ENCODE measurements at regions of chr7 and their contacts with region 1.

Region 1: DNA sequence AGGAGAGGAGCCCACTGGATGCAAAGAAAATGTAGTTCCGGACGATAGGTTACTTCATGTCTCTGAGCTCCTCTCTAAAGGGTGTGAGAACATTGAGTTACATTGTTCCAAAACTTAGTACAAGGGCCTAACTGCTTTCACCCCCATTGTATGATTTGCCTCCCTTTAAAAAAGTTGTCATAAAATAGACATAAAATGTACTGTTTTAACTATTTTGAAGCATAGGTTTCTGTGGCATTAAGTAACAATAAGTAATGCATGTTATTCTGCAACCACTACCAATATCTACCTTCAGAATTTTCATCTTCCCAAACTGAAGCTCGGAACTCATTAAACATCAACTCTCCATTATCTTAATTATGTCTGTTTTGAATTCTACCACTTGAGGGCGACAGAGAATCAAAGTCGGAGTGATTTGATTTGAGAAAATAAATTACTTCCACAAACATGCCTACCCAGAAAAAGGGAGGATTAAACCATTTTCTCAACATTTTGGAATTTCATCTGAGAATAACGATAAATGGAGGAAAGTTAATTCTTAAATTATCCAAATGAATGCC is 2.7 kb downstream of the IGFBP1 start:
- DNase-seq: peak; percentile 62
- H3K4me3 ChIP-seq: no peak overlapping the region
- H3K27ac ChIP-seq: peak overlapping the region; percentile 30
- H3K4me1 ChIP-seq: peaks cover 46% of the 10 kb centered on the region
- H3K27me3 ChIP-seq: peaks cover 0 to 1% of the 10 kb centered on the region in 2 experiments
- CTCF ChIP-seq: peak; percentile 20 to 40
- POLR2A ChIP-seq: no peak

Region 2: DNA sequence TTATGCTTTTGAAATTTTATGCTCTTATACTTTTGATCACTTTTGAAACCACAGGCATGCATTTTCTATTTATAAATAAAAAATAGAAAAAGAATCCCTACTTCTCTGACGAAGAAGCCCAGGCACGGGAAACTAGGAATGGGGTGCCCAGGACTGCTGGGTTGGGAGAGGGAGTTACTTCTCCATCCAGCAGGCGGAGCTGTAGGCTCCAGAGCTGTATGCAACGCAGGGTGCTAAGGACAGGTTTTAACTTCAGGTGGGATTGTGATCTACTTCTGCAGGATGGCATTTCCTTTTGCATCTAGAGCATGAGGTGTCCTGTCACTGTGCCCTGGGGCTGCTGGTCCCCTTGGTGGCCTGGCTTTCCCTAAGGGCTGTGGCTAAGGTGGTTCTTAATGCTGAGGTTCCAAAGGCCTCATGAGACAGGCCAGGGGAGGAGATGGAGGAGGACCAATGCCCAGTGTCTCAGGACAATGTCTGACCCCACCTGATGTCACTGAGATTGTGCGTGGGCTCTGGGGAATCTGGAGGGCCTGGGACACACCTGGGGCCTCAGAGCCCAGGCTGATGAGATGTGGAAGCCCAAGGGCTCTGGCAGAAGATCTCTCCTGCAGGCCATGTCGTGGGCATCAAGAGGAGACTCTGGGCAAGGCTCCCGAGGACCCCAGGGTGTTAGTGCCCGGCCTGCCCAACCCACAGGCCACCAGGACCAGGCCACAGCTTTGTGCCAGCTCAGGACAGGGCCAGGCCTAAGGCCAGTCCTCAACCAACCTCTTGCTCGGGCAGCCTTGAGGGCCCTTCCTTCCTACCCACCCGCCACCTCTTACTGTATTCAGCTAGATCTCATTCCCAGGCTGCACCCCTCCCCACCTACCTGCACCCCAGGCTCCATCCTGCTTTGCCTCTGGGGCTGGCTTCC is 18.6 kb before region 1 on chr7:
- CTCF ChIA-PET with region 1: interaction called, 9 read pairs
- POLR2A ChIA-PET with region 1: no interaction called
- dilution Hi-C with region 1: no loop called
- intact Hi-C with region 1: loop called (anchors 1 kb)
- DNase-seq: no peak
- H3K4me3 ChIP-seq: no peak overlapping the region
- H3K27ac ChIP-seq: no peak overlapping the region
- H3K4me1 ChIP-seq: peaks cover 15% of the 10 kb centered on the region
- H3K27me3 ChIP-seq: no peaks in the 10 kb centered on the region
- CTCF ChIP-seq: peak; percentile 67 to 71
- POLR2A ChIP-seq: no peak

Region 3: DNA sequence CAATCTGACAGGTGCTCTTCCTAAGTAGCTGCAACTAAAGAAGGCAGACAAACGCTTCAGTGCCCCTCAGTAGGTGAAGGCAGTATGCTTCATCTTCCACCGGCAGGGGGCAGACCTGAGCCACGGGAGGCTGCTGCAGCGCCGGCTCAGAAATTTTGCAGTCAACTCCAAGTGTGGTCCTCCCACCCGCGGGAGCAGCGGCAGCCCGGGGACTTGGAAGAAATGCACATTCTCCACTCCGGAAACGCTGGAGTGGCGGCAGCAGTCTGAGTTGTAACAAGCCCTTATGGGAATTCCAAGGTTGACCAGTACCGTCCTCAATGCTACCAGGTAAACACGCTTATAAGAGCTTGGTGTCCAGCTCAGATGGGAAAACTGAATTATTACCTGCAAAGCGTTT is 26.7 kb after region 1 on chr7:
- CTCF ChIA-PET with region 1: interaction called, 100 read pairs
- POLR2A ChIA-PET with region 1: no interaction called
- dilution Hi-C with region 1: no loop called
- intact Hi-C with region 1: loop called (anchors 1 kb)
- DNase-seq: peak; percentile 69
- H3K4me3 ChIP-seq: no peak overlapping the region
- H3K27ac ChIP-seq: no peak overlapping the region
- H3K4me1 ChIP-seq: peaks cover 24% of the 10 kb centered on the region
- H3K27me3 ChIP-seq: peaks cover 22 to 37% of the 10 kb centered on the region in 2 experiments
- CTCF ChIP-seq: peak; percentile 87 to 93
- POLR2A ChIP-seq: no peak

Region 4: GRCh38 chr7:46321556-46322205 is 430.7 kb after region 1 on chr7:
- CTCF ChIA-PET with region 1: interaction called, 3 read pairs
- POLR2A ChIA-PET with region 1: no interaction called
- dilution Hi-C with region 1: no loop called
- intact Hi-C with region 1: loop called (anchors 1 kb)
- DNase-seq: peak; percentile 94
- H3K4me3 ChIP-seq: no peak overlapping the region
- H3K27ac ChIP-seq: peak overlapping the region; percentile 58
- H3K4me1 ChIP-seq: no peaks in the 10 kb centered on the region
- H3K27me3 ChIP-seq: no peaks in the 10 kb centered on the region
- CTCF ChIP-seq: no peak
- POLR2A ChIP-seq: no peak

Region 5: DNA sequence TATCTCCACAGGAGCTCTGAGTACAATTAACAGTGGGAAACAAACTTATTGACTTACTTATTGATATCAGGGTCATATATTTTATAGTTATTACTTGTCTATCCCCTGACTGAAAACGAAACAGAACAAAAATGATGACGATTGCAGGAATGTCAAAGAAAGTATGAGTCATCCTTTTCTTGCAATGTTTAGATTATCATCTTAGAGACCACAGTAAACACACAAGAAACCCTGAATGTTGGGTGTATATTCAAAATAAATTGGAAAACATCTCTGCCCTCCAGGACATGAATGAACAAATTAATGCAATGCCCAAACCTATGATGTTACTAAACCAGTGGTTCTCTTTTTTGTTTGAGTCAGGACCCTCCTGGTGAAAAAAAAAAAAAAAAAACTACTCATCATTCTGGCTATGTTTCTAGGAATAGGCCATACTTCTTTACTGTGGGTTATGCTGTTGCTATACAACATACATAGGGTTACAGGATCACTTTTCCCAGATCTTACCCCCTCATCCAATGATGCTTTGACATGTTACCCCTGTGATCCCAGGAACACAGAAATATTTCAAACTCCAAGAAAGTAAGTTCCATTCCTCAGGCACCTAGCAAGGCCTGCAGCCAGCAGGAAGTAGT is 653.5 kb after region 1 on chr7:
- CTCF ChIA-PET with region 1: no interaction called
- POLR2A ChIA-PET with region 1: no interaction called
- dilution Hi-C with region 1: no loop called
- intact Hi-C with region 1: loop called (anchors 1 kb)
- DNase-seq: peak; percentile 72
- H3K4me3 ChIP-seq: no peak overlapping the region
- H3K27ac ChIP-seq: peak overlapping the region; percentile 96
- H3K4me1 ChIP-seq: peaks cover 26% of the 10 kb centered on the region
- H3K27me3 ChIP-seq: no peaks in the 10 kb centered on the region
- CTCF ChIP-seq: no peak
- POLR2A ChIP-seq: no peak

Region 6: GRCh38 chr7:47179812-47180515 is 1289.0 kb after region 1 on chr7:
- CTCF ChIA-PET with region 1: interaction called, 7 read pairs
- POLR2A ChIA-PET with region 1: no interaction called
- dilution Hi-C with region 1: no loop called
- intact Hi-C with region 1: loop called (anchors 1 kb)
- DNase-seq: peak; percentile 51
- H3K4me3 ChIP-seq: no peak overlapping the region
- H3K27ac ChIP-seq: no peak overlapping the region
- H3K4me1 ChIP-seq: no peaks in the 10 kb centered on the region
- H3K27me3 ChIP-seq: peaks cover 0 to 2% of the 10 kb centered on the region in 2 experiments
- CTCF ChIP-seq: peak; percentile 69 to 74
- POLR2A ChIP-seq: no peak

Region 7: DNA sequence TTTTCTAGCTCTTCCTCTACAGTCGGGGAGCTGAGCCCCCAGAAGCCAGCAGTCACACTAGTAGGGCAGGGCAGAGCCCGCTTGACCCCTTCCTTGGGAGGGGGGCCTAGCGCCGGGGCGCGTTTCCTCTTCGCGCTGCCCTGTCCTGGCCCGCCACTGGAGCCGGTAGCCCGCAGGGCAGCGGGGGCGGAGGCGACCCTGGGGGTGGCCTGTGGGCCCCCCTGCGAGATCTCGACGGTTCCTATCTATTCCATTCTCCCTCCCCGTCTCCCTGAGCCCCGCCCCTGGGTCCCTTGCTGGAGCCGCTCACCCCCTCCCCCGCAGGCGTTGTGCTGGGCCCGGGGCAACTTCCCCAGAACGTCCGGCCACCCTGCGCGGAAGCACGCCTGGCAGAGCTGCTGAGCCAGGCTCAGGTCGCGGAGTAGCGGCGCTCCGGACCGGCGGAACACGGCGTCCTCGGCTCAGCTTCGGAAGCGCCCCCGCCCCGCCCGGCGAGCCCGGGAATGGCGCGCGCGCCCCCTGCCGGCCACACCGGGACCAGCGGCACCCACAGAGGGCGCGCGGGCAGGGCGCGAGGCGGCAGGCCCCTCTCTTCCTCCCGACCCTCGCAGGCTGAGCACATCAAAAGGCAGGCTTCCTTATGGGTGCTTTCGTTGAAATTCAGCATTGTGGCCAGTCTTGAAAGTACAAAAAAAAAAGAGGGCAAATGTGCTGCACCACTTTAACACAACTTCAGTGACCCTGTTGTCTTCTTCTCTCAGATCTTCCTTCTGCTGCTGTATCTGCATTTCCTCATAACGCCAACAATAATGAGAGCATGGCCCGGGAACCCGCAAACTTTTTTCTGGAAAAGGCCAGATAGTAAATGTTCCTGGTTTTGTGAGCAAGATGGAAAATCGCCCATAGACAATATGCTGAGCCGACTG is 1363.4 kb after region 1 on chr7:
- CTCF ChIA-PET with region 1: interaction called, 7 read pairs
- POLR2A ChIA-PET with region 1: no interaction called
- dilution Hi-C with region 1: no loop called
- intact Hi-C with region 1: loop called (anchors 5 kb)
- DNase-seq: peak; percentile 55
- H3K4me3 ChIP-seq: peak overlapping the region; percentile 59 to 69 (median 68)
- H3K27ac ChIP-seq: peak overlapping the region; percentile 58
- H3K4me1 ChIP-seq: peaks cover 15% of the 10 kb centered on the region
- H3K27me3 ChIP-seq: peaks cover 0 to 1% of the 10 kb centered on the region in 2 experiments
- CTCF ChIP-seq: peak; percentile 64 to 90
- POLR2A ChIP-seq: no peak

Measured in endothelial cell of umbilical vein (primary cell).